ENCODE measurements at regions of chr11 and their contacts with region 1.

Region 1: DNA sequence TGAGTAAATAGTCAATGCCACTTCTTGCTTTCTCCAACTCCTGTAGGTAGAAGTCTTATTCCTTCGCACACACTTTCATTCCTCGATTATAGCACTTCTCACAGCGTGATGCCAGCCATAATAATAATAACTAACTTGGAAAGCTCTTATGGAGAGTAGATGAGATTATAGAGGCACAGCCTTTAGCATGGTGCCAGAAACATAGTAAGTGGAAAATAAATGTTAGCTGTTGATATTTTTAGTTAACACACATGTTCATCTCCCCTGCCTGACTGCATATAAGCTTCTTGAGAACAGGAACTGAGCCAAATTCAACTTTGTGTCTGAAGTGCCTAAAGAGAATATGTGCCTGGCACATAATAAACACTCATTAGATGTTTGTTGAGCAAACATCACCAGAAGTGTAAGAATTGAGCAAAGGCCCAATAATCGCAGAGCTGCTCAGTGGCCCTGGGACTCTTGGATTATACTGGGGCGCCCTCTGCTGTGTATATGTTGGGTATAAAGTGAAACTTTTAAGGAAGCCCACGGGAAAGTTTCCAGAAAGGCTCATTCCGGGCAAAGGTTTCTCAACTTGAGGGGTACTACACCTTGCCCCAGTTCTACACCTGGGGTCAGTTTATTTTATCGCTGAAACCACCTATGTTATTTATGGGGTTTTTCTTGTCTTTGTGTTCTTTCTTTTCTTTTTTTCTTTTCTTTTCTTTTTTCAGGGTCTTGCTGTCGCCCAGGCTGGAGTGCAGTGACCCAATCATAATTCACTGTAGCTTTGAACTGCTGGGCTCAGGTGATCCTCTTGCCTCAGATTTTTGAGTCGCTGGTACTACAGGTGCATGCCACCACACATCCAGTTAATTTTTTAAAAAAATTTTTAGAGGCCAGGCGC is 22.3 kb downstream of the SLN start:
- DNase-seq: peak in 2 of 3 donors; percentile 63 to 76
- ATAC-seq: peak; percentile 96 to 99 (median 97)
- H3K4me3 ChIP-seq: no peak overlapping the region
- H3K27ac ChIP-seq: no peak overlapping the region
- H3K4me1 ChIP-seq: no peaks in the 10 kb centered on the region
- H3K27me3 ChIP-seq: no peaks in the 10 kb centered on the region
- CTCF ChIP-seq: peak; percentile 68 to 76 (median 74)
- POLR2A ChIP-seq: no peak

Region 2: GRCh38 chr11:107573438-107573837 is 116.1 kb before region 1 on chr11:
- intact Hi-C with region 1: loop called in 1 of 2 experiments (anchors 10 kb)
- DNase-seq: no peak
- ATAC-seq: no peak
- H3K4me3 ChIP-seq: no peak overlapping the region
- H3K27ac ChIP-seq: no peak overlapping the region
- H3K4me1 ChIP-seq: no peaks in the 10 kb centered on the region
- H3K27me3 ChIP-seq: no peaks in the 10 kb centered on the region
- CTCF ChIP-seq: no peak
- POLR2A ChIP-seq: no peak

Region 3: GRCh38 chr11:107583629-107584195 is 105.8 kb before region 1 on chr11:
- intact Hi-C with region 1: loop called (anchors 10 kb)
- DNase-seq: no peak
- ATAC-seq: no peak
- H3K4me3 ChIP-seq: no peak overlapping the region
- H3K27ac ChIP-seq: no peak overlapping the region
- H3K4me1 ChIP-seq: no peaks in the 10 kb centered on the region
- H3K27me3 ChIP-seq: peaks cover 0 to 7% of the 10 kb centered on the region in 2 donors
- CTCF ChIP-seq: no peak
- POLR2A ChIP-seq: no peak

Measured in right lobe of liver (tissue), 6 donors.